ENCODE measurements at regions of chr20 and their contacts with region 1.

Region 1: DNA sequence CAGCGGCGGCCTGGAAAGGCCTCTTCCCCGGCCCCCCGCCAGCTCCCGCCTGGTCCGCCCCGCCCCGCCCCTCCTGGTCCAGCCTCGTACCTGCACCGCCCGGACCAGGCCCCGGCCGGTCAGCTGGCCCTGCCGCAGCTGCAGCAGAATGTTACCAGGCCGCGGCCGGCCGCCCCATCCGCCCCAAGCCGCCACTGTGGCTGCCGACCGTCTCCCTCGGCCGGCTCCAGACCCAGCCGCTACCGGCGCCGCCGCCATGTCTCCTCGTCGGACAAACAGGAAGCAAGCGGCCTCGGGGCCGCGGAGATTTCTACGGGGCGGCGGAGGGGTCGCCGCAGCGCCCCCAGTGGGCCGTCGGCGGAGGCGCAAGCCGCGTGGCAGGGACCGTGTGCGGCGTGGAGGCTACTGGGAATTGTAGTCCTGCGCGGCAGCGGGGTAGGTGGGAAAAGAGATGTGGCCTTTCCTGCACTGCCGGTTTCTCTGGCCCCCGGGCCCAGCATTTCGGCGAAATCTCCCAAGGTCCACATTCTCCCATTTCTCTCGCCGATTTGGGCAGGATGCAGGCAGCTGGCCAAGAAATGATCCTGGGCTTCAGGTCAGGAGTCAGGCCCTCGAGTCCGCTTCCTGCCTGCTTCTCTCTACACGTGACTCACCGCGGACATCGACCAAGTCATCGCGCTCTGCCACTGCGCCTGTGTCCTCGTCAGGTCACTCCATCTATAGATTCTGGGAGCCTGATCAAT is at the start of gene TRPC4AP:
- DNase-seq: peak; percentile 77 to 95 (median 87)
- ATAC-seq: peak; percentile 97
- H3K4me3 ChIP-seq: peak within 1 kb of the TSS; percentile 84 to 91
- H3K4me3 Mint-ChIP-seq: peak within 1 kb of the TSS; percentile 89
- H3K27ac ChIP-seq: peak within 1 kb of the TSS; percentile 72 to 74
- H3K27ac Mint-ChIP-seq: peak within 1 kb of the TSS; percentile 91
- H3K4me1 ChIP-seq: peaks cover 42% of the 10 kb centered on the region
- H3K4me1 Mint-ChIP-seq: peaks cover 49% of the 10 kb centered on the region
- H3K27me3 ChIP-seq: no peaks in the 10 kb centered on the region
- H3K27me3 Mint-ChIP-seq: no peaks in the 10 kb centered on the region
- CTCF ChIP-seq: peak; percentile 88
- total RNA-seq, gene TRPC4AP: 63.3 to 64.0 TPM

Region 2: DNA sequence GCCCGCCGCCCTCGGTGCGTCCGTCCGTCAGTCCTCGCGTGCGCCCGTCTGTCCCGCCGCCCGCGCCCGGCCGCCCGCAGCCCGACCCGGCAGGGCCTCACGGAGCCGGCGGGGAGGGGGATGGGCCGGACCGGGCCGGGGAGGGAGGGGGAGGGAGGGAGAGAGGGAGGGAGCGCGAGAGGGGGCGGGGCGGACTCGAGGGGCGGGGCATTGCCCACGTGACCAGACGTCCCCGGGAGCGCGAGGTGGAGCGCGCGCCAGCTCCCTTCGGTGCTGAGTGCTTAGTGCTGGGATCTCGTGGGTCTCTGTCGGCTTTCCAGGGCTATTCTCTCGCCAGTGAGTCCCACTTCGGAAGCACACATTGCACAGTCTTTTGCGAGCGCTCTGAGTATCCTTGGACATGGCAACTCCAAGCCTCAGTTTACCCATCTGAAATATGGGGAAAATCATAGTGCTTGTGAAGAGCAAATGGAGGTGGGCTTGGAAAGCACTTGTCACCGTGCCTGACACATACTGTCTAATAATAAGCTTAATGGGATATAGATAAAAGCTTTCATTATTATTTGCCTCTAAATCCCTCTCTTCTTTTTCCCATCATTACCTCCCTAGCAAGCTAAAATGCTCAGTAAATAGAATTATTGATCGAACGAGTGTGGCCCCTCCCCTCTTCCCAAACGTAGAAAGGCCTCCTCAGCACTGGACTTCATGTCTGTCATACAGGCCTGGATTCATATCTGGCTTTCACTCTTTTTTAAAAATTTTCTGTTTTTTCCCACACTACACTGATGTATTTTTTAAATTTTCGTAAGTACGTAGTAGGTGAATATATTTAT is 266.9 kb before region 1 on chr20 and contains the start of gene NCOA6:
- CTCF ChIA-PET with region 1: no interaction called
- POLR2A ChIA-PET with region 1: no interaction called
- intact Hi-C with region 1: loop called (anchors 1 kb)
- DNase-seq: peak; percentile 76 to 92 (median 85)
- ATAC-seq: peak; percentile 71
- H3K4me3 ChIP-seq: peak within 1 kb of the TSS; percentile 87 to 89
- H3K4me3 Mint-ChIP-seq: peak within 1 kb of the TSS; percentile 98
- H3K27ac ChIP-seq: peak within 1 kb of the TSS; percentile 38 to 67
- H3K27ac Mint-ChIP-seq: peak within 1 kb of the TSS; percentile 97
- H3K4me1 ChIP-seq: peaks cover 21% of the 10 kb centered on the region
- H3K4me1 Mint-ChIP-seq: peaks cover 41% of the 10 kb centered on the region
- H3K27me3 ChIP-seq: no peaks in the 10 kb centered on the region
- H3K27me3 Mint-ChIP-seq: peaks cover 2% of the 10 kb centered on the region
- CTCF ChIP-seq: no peak
- total RNA-seq, gene NCOA6: 13.0 to 13.5 TPM

Region 3: GRCh38 chr20:34955232-34956040 is 137.3 kb before region 1 on chr20 and contains the starts of genes GSS and MYH7B:
- CTCF ChIA-PET with region 1: no interaction called
- POLR2A ChIA-PET with region 1: no interaction called
- intact Hi-C with region 1: loop called (anchors 1 to 5 kb)
- DNase-seq: peak; percentile 90 to 99 (median 96)
- ATAC-seq: peak; percentile 95
- H3K4me3 ChIP-seq: peak within 1 kb of the TSS; percentile 74 to 83
- H3K4me3 Mint-ChIP-seq: peak within 1 kb of the TSS; percentile 99
- H3K27ac ChIP-seq: peak within 1 kb of the TSS; percentile 64 to 84
- H3K27ac Mint-ChIP-seq: peak within 1 kb of the TSS; percentile 95
- H3K4me1 ChIP-seq: peaks cover 12% of the 10 kb centered on the region
- H3K4me1 Mint-ChIP-seq: peaks cover 32% of the 10 kb centered on the region
- H3K27me3 ChIP-seq: no peaks in the 10 kb centered on the region
- H3K27me3 Mint-ChIP-seq: no peaks in the 10 kb centered on the region
- CTCF ChIP-seq: no peak
- total RNA-seq, gene GSS: 23.6 to 24.3 TPM
- total RNA-seq, gene MYH7B: 0.19 to 0.54 TPM

Region 4: DNA sequence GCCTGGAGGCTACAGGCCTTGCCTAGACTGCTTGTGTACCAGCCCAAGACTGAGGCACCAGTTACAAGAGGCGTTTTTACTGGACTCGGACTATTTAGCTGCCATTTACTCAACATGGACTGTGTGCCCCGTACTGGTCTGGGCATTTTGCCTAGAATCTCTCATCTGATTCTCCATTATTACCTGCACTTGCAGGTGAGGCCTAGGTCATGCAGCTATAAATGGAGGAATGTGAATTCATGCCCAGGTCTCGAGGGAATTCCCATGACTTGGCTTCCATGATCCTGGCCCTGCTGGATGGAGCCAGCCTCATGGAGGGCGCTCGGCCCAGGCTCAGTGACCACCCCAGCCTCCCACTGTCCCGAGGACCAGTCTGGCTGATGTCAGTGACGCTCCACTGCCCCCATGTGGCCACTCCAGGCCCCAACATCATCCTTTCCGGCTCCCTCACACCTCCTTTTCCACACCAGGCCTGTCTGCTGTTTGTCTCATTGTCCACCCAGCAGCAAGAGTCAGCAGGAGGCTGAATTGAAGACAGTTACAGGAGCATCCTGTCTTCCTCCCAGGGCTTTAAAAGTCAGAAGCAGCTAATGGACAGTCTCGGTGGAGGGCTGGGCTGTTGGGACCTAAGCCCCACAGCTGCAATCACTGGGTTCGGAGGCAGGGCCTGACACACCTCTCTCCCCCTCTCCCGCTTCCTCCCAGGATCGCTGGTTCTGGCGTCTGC is 176.5 kb after region 1 on chr20:
- CTCF ChIA-PET with region 1: interaction called, 12 read pairs
- POLR2A ChIA-PET with region 1: no interaction called
- intact Hi-C with region 1: loop called (anchors 1 to 2 kb)
- DNase-seq: peak in 8 of 9 experiments; percentile 16 to 69 (median 56)
- ATAC-seq: peak; percentile 79
- H3K4me3 ChIP-seq: no peak overlapping the region
- H3K4me3 Mint-ChIP-seq: no peak overlapping the region
- H3K27ac ChIP-seq: no peak overlapping the region
- H3K27ac Mint-ChIP-seq: no peak overlapping the region
- H3K4me1 ChIP-seq: no peaks in the 10 kb centered on the region
- H3K4me1 Mint-ChIP-seq: peaks cover 9% of the 10 kb centered on the region
- H3K27me3 ChIP-seq: no peaks in the 10 kb centered on the region
- H3K27me3 Mint-ChIP-seq: no peaks in the 10 kb centered on the region
- CTCF ChIP-seq: peak; percentile 60

Region 5: GRCh38 chr20:35454881-35455609 is 362.4 kb after region 1 on chr20 and contains the start of gene CEP250:
- CTCF ChIA-PET with region 1: no interaction called
- POLR2A ChIA-PET with region 1: no interaction called
- intact Hi-C with region 1: loop called in 1 of 2 experiments (anchors 2 kb)
- DNase-seq: peak; percentile 86 to 96 (median 95)
- ATAC-seq: peak; percentile 98
- H3K4me3 ChIP-seq: peak within 1 kb of the TSS; percentile 62 to 94
- H3K4me3 Mint-ChIP-seq: peak within 1 kb of the TSS; percentile 94
- H3K27ac ChIP-seq: peak within 1 kb of the TSS; percentile 52 to 94
- H3K27ac Mint-ChIP-seq: peak within 1 kb of the TSS; percentile 97
- H3K4me1 ChIP-seq: peaks cover 10% of the 10 kb centered on the region
- H3K4me1 Mint-ChIP-seq: peaks cover 21% of the 10 kb centered on the region
- H3K27me3 ChIP-seq: no peaks in the 10 kb centered on the region
- H3K27me3 Mint-ChIP-seq: no peaks in the 10 kb centered on the region
- CTCF ChIP-seq: no peak
- total RNA-seq, gene CEP250: 33.4 to 34.4 TPM